ENCODE measurements at regions of chr15 and their contacts with region 1.

Region 1: GRCh38 chr15:52078876-52079700 is 33.5 kb downstream of the BCL2L10 start:
- DNase-seq: peak; percentile 62 to 90 (median 84)
- ATAC-seq: peak; percentile 67
- H3K4me3 ChIP-seq: no peak overlapping the region
- H3K4me3 Mint-ChIP-seq: no peak overlapping the region
- H3K27ac ChIP-seq: no peak overlapping the region
- H3K27ac Mint-ChIP-seq: no peak overlapping the region
- H3K4me1 ChIP-seq: no peaks in the 10 kb centered on the region
- H3K4me1 Mint-ChIP-seq: peaks cover 20% of the 10 kb centered on the region
- H3K27me3 ChIP-seq: no peaks in the 10 kb centered on the region
- H3K27me3 Mint-ChIP-seq: no peaks in the 10 kb centered on the region
- CTCF ChIP-seq: peak; percentile 87

Region 2: GRCh38 chr15:50675536-50676144 is 1403.4 kb before region 1 on chr15:
- CTCF ChIA-PET with region 1: no interaction called
- POLR2A ChIA-PET with region 1: no interaction called
- intact Hi-C with region 1: no loop called
- DNase-seq: peak in 2 of 9 experiments; percentile 47 to 57
- ATAC-seq: peak; percentile 56
- H3K4me3 ChIP-seq: no peak overlapping the region
- H3K4me3 Mint-ChIP-seq: no peak overlapping the region
- H3K27ac ChIP-seq: no peak overlapping the region
- H3K27ac Mint-ChIP-seq: peak overlapping the region; percentile 37
- H3K4me1 ChIP-seq: peaks cover 7% of the 10 kb centered on the region
- H3K4me1 Mint-ChIP-seq: peaks cover 49% of the 10 kb centered on the region
- H3K27me3 ChIP-seq: no peaks in the 10 kb centered on the region
- H3K27me3 Mint-ChIP-seq: no peaks in the 10 kb centered on the region
- CTCF ChIP-seq: peak; percentile 100

Region 3: DNA sequence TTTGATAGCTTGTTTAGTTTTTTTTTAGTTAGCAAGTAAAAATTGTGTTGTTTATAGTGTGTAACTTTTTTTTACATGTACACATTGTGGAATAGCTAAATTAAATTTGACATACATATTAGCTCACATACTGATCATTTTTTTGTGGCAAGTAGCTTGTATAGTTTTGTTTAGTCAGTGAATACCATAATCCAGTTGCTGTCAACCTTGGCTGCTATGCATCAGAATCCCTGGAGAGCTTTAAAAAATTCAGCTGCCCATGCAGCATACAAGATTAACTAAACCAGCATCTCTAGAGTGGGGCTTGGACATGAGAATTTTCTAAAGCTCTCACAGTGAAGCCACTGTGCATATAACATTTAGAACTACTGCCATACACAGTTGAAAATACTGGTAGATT is 195.7 kb before region 1 on chr15:
- CTCF ChIA-PET with region 1: interaction called, 10 read pairs
- POLR2A ChIA-PET with region 1: no interaction called
- intact Hi-C with region 1: loop called in 1 of 2 experiments (anchors 5 kb)
- DNase-seq: no peak
- ATAC-seq: no peak
- H3K4me3 ChIP-seq: no peak overlapping the region
- H3K4me3 Mint-ChIP-seq: no peak overlapping the region
- H3K27ac ChIP-seq: no peak overlapping the region
- H3K27ac Mint-ChIP-seq: no peak overlapping the region
- H3K4me1 ChIP-seq: no peaks in the 10 kb centered on the region
- H3K4me1 Mint-ChIP-seq: peaks cover 22% of the 10 kb centered on the region
- H3K27me3 ChIP-seq: no peaks in the 10 kb centered on the region
- H3K27me3 Mint-ChIP-seq: no peaks in the 10 kb centered on the region
- CTCF ChIP-seq: no peak

Region 4: DNA sequence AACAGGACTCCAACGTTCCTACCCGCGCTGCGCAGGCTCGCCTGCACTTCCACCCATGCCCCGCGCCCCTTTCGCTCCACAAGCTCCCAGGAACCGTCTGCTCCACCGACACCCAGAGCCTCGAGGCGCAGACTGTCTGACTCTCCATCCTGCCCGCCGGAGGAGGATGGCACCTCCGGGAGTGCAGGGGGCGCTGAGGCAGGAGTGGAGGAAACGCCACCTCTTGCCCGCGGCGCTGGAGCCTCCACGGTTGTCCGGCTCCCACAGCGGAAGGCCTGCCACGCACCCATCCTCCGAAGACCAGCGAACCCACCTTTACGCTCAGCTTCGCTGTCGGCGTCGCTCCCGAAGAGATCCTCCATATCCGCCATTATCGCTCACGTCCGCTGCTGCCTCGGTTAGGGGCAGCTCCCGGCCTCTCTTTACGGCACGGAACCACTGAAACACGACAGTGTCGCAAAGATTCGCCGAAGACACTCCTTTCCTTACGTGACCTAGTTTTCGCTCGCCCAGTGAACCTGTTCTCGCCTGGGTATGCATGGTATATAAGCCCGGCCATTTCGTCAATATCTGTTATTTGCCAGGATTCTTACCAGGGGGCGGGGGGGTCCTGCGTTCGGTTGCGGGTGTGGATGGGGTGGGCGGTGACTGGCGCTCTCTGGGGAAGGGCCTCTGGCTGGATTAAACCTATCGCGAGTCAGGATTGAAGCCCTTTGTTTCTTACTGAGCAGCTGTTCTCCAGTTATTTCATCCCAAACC is 107.5 kb before region 1 on chr15 and contains the start of gene LEO1:
- CTCF ChIA-PET with region 1: interaction called, 15 read pairs
- POLR2A ChIA-PET with region 1: interaction called, 4 read pairs
- intact Hi-C with region 1: no loop called
- DNase-seq: peak; percentile 72 to 97 (median 88)
- ATAC-seq: peak; percentile 91
- H3K4me3 ChIP-seq: peak within 1 kb of the TSS; percentile 85 to 99
- H3K4me3 Mint-ChIP-seq: peak within 1 kb of the TSS; percentile 99
- H3K27ac ChIP-seq: peak within 1 kb of the TSS; percentile 69 to 87
- H3K27ac Mint-ChIP-seq: peak within 1 kb of the TSS; percentile 99
- H3K4me1 ChIP-seq: peaks cover 13% of the 10 kb centered on the region
- H3K4me1 Mint-ChIP-seq: peaks cover 21% of the 10 kb centered on the region
- H3K27me3 ChIP-seq: no peaks in the 10 kb centered on the region
- H3K27me3 Mint-ChIP-seq: no peaks in the 10 kb centered on the region
- CTCF ChIP-seq: peak; percentile 26
- total RNA-seq, gene LEO1: 9.4 TPM

Region 5: DNA sequence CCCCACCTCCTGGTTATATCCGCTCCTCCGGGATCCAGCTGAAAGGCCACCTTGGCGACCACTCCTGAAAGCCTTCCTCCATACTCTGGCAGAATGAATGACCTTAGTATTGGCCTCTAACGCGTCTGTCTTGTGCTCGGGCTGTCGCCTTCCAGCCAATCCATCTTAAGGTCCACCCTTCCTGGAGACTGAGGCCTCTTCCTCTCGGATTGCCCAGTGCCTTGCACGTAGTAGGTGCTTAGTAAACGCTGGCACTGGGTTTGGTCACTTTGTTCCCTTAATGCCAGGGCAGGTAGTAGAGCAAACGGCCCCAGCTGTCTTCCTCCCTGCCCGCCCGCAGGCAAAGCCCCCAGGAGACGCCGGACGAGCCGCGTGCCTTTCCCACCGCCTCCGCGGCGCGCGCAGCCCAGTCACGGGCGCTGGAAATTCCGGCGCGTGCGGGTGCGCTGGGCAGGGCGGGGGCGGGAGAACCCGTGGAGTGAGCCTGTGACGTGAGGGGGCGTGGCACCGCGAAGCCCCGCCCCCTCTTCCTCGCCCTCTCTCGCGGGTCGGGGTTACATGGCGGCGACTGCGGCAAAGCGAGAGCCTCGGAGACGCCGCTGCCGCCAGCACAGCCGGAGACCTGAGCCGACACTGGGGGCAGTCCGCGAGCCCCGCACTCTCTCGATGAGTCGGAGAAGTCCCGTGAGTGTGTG is 60.2 kb before region 1 on chr15 and contains the start of gene MAPK6:
- CTCF ChIA-PET with region 1: interaction called, 7 read pairs
- POLR2A ChIA-PET with region 1: interaction called, 4 read pairs
- intact Hi-C with region 1: loop called in 1 of 2 experiments (anchors 2 kb)
- DNase-seq: peak; percentile 89 to 98 (median 92)
- ATAC-seq: peak; percentile 87
- H3K4me3 ChIP-seq: peak within 1 kb of the TSS; percentile 74 to 84
- H3K4me3 Mint-ChIP-seq: peak within 1 kb of the TSS; percentile 97
- H3K27ac ChIP-seq: peak within 1 kb of the TSS; percentile 74 to 84
- H3K27ac Mint-ChIP-seq: peak within 1 kb of the TSS; percentile 99
- H3K4me1 ChIP-seq: peaks cover 29% of the 10 kb centered on the region
- H3K4me1 Mint-ChIP-seq: peaks cover 35% of the 10 kb centered on the region
- H3K27me3 ChIP-seq: no peaks in the 10 kb centered on the region
- H3K27me3 Mint-ChIP-seq: no peaks in the 10 kb centered on the region
- CTCF ChIP-seq: no peak
- total RNA-seq, gene MAPK6: 39.8 to 42.5 TPM

Region 6: GRCh38 chr15:52057996-52058395 is 21.1 kb before region 1 on chr15:
- CTCF ChIA-PET with region 1: interaction called, 12 read pairs
- POLR2A ChIA-PET with region 1: no interaction called
- intact Hi-C with region 1: no loop called
- DNase-seq: no peak
- ATAC-seq: no peak
- H3K4me3 ChIP-seq: no peak overlapping the region
- H3K4me3 Mint-ChIP-seq: no peak overlapping the region
- H3K27ac ChIP-seq: no peak overlapping the region
- H3K27ac Mint-ChIP-seq: no peak overlapping the region
- H3K4me1 ChIP-seq: no peaks in the 10 kb centered on the region
- H3K4me1 Mint-ChIP-seq: peaks cover 1% of the 10 kb centered on the region
- H3K27me3 ChIP-seq: no peaks in the 10 kb centered on the region
- H3K27me3 Mint-ChIP-seq: no peaks in the 10 kb centered on the region
- CTCF ChIP-seq: no peak

Region 7: GRCh38 chr15:52208306-52208946 is 129.3 kb after region 1 on chr15:
- CTCF ChIA-PET with region 1: interaction called, 11 read pairs
- POLR2A ChIA-PET with region 1: no interaction called
- intact Hi-C with region 1: loop called in 1 of 2 experiments (anchors 1 kb)
- DNase-seq: peak; percentile 52 to 81 (median 77)
- ATAC-seq: peak; percentile 100
- H3K4me3 ChIP-seq: no peak overlapping the region
- H3K4me3 Mint-ChIP-seq: no peak overlapping the region
- H3K27ac ChIP-seq: no peak overlapping the region
- H3K27ac Mint-ChIP-seq: no peak overlapping the region
- H3K4me1 ChIP-seq: no peaks in the 10 kb centered on the region
- H3K4me1 Mint-ChIP-seq: no peaks in the 10 kb centered on the region
- H3K27me3 ChIP-seq: no peaks in the 10 kb centered on the region
- H3K27me3 Mint-ChIP-seq: no peaks in the 10 kb centered on the region
- CTCF ChIP-seq: peak; percentile 88

Measured in CD8-positive, alpha-beta T cell (primary cell).